ENCODE measurements at regions of chr16 and their contacts with region 1.

Region 1: GRCh38 chr16:89860747-89861304 is 12.6 kb upstream of the TCF25 start:
- DNase-seq: peak; percentile 57
- H3K4me3 ChIP-seq: no peak overlapping the region
- H3K27ac ChIP-seq: no peak overlapping the region
- H3K4me1 ChIP-seq: peaks cover 16% of the 10 kb centered on the region
- H3K27me3 ChIP-seq: no peaks in the 10 kb centered on the region
- CTCF ChIP-seq: peak; percentile 94 to 99
- POLR2A ChIP-seq: no peak

Region 2: GRCh38 chr16:89678258-89678657 is 182.6 kb before region 1 on chr16:
- CTCF ChIA-PET with region 1: no interaction called
- POLR2A ChIA-PET with region 1: no interaction called
- dilution Hi-C with region 1: no loop called
- intact Hi-C with region 1: no loop called
- DNase-seq: no peak
- H3K4me3 ChIP-seq: no peak overlapping the region
- H3K27ac ChIP-seq: no peak overlapping the region
- H3K4me1 ChIP-seq: no peaks in the 10 kb centered on the region
- H3K27me3 ChIP-seq: no peaks in the 10 kb centered on the region
- CTCF ChIP-seq: no peak
- POLR2A ChIP-seq: no peak

Region 3: GRCh38 chr16:89700100-89700648 is 160.7 kb before region 1 on chr16:
- CTCF ChIA-PET with region 1: interaction called, 90 read pairs
- POLR2A ChIA-PET with region 1: no interaction called
- dilution Hi-C with region 1: no loop called
- intact Hi-C with region 1: loop called (anchors 2 kb)
- DNase-seq: peak; percentile 96
- H3K4me3 ChIP-seq: peak overlapping the region in 2 of 3 experiments; percentile 7 to 62
- H3K27ac ChIP-seq: peak overlapping the region; percentile 26
- H3K4me1 ChIP-seq: peaks cover 9% of the 10 kb centered on the region
- H3K27me3 ChIP-seq: no peaks in the 10 kb centered on the region
- CTCF ChIP-seq: peak; percentile 70 to 88
- POLR2A ChIP-seq: no peak

Region 4: GRCh38 chr16:89720813-89721545 is 139.8 kb before region 1 on chr16 and contains the starts of genes VPS9D1 and ZNF276:
- CTCF ChIA-PET with region 1: no interaction called
- POLR2A ChIA-PET with region 1: no interaction called
- dilution Hi-C with region 1: no loop called
- intact Hi-C with region 1: loop called (anchors 5 kb)
- DNase-seq: peak; percentile 79
- H3K4me3 ChIP-seq: peak within 1 kb of the TSS; percentile 57 to 76 (median 63)
- H3K27ac ChIP-seq: peak within 1 kb of the TSS; percentile 95
- H3K4me1 ChIP-seq: peaks cover 36% of the 10 kb centered on the region
- H3K27me3 ChIP-seq: no peaks in the 10 kb centered on the region
- CTCF ChIP-seq: no peak
- POLR2A ChIP-seq: peak; percentile 80
- total RNA-seq, gene VPS9D1: 15.5 and 18.3 TPM in 2 replicates
- total RNA-seq, gene ZNF276: 36.6 and 42.7 TPM in 2 replicates

Region 5: GRCh38 chr16:89791278-89791995 is 69.4 kb before region 1 on chr16:
- CTCF ChIA-PET with region 1: interaction called, 21 read pairs
- POLR2A ChIA-PET with region 1: no interaction called
- dilution Hi-C with region 1: no loop called
- intact Hi-C with region 1: loop called (anchors 2 kb)
- DNase-seq: no peak
- H3K4me3 ChIP-seq: no peak overlapping the region
- H3K27ac ChIP-seq: no peak overlapping the region
- H3K4me1 ChIP-seq: no peaks in the 10 kb centered on the region
- H3K27me3 ChIP-seq: no peaks in the 10 kb centered on the region
- CTCF ChIP-seq: no peak
- POLR2A ChIP-seq: no peak

Region 6: DNA sequence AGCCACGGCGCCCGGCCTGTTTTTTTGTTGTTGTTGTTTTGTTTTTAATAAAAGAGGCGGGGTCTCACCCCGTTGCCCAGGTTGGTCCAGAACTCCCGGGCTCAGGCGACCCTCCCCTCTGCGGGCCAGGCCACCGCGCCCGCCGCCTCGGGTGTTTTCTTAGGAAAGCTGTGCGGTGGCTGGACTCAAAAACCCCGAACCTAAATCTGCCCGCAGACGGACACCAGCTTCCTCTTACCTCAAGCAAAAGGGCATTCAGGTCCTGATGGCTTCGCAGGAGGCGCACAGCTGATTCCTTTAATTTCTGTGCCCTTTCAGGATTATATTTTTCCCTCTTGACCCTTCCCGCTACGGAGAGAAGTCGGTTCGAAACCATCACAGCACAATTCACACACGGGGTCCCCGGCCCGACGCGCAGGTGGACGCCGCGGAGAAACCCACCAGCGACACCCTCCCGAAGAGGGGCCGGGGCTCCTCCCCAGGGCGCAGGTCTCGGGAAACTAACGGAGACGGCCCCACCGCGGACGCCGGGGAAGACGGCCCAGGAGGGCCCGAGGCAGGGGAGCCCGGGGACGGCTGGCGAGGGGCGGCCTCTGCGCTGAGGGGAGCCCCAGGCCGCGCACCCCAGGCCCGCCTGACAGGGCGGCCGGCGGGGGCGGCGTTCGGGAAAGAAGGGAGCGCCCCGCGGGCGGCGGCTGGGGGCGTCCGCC is 45.0 kb before region 1 on chr16:
- CTCF ChIA-PET with region 1: interaction called, 8 read pairs
- POLR2A ChIA-PET with region 1: no interaction called
- dilution Hi-C with region 1: no loop called
- intact Hi-C with region 1: loop called (anchors 1 kb)
- DNase-seq: no peak
- H3K4me3 ChIP-seq: peak overlapping the region; percentile 47 to 91 (median 89)
- H3K27ac ChIP-seq: peak overlapping the region; percentile 73
- H3K4me1 ChIP-seq: peaks cover 6% of the 10 kb centered on the region
- H3K27me3 ChIP-seq: no peaks in the 10 kb centered on the region
- CTCF ChIP-seq: no peak
- POLR2A ChIP-seq: no peak

Region 7: DNA sequence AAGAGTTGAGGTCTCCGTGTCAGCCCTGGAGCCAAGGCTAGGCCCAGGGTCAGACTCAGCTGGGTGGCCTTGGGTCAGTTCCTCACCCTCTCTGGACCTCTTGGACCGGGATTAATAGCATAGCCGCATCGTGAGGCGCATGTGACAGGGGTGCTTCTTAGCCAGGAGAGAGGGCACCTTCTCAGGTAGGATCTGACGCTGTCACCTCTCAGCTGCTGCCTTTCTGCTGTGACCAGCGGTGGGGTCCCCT is 23.6 kb before region 1 on chr16:
- CTCF ChIA-PET with region 1: interaction called, 10 read pairs
- POLR2A ChIA-PET with region 1: no interaction called
- dilution Hi-C with region 1: no loop called
- intact Hi-C with region 1: no loop called
- DNase-seq: no peak
- H3K4me3 ChIP-seq: no peak overlapping the region
- H3K27ac ChIP-seq: no peak overlapping the region
- H3K4me1 ChIP-seq: no peaks in the 10 kb centered on the region
- H3K27me3 ChIP-seq: no peaks in the 10 kb centered on the region
- CTCF ChIP-seq: no peak
- POLR2A ChIP-seq: no peak

Measured in endothelial cell of umbilical vein (primary cell).